K562 (cell line): ENCODE measurements at regions of chr1 and their contacts with region 1.

Region 1: GRCh38 chr1:54406339-54407153 is at the start of gene SSBP3:
- DNase-seq: peak; percentile 97 to 99 (median 97)
- ATAC-seq: peak; percentile 88
- H3K4me3 ChIP-seq: peak within 1 kb of the TSS; percentile 73
- H3K27ac ChIP-seq: peak within 1 kb of the TSS; percentile 97
- H3K4me1 ChIP-seq: peaks cover 64 to 70% of the 10 kb centered on the region in 2 experiments
- H3K27me3 ChIP-seq: no peaks in the 10 kb centered on the region
- CTCF ChIP-seq: peak in 1 of 3 experiments; percentile 12; a peak in 1 of 6 replicates
- EP300 ChIP-seq: no peak
- POLR2A ChIP-seq: peak; percentile 70
- RAD21 ChIP-seq: peak; percentile 21 to 29; a peak in 1 of 4 replicates
- polyA plus RNA-seq, gene SSBP3: 8.7 TPM

Region 2: DNA sequence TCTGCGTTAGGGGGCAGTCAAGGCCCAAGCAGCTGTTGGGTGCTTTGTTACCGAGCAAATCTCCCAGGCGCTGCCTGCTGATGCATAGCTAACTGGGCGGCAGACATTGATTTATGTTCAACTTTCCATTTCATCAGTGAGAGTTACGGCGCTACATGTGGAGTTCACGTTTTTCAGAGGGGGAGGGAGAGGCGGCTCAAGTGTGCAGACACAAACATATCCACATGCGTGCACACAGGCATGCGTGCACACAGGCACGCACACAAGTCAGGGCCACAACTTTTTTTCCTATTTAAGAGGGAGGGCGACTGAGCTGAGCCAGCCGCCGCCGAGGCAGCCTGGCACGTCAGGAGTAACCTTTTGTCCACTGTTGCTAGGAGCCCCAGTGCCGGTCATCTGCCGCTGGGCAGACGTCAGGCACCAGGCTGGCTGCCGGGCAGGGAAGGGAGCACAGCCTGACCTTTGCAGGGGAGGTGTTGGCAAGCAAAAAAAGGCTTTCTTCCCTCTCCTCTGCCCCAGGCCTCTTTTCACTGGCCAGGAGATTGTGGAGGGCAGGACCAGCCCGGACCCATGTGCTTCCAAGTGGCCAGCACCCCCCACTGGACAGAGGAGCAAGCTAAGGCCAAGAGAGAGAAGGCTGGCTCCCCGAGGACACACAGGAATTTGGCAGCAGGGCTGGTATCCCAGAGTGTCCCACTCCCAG is 133.3 kb before region 1 on chr1:
- CTCF ChIA-PET with region 1: no interaction called
- POLR2A ChIA-PET with region 1: no interaction called
- in situ Hi-C with region 1: no loop called
- intact Hi-C with region 1: loop called (anchors 1 kb)
- DNase-seq: peak; percentile 69 to 88 (median 77)
- ATAC-seq: peak; percentile 88
- H3K4me3 ChIP-seq: no peak overlapping the region; the same call in 1 of the 2 replicates
- H3K27ac ChIP-seq: peak overlapping the region; percentile 71
- H3K4me1 ChIP-seq: peaks cover 43 to 44% of the 10 kb centered on the region in 2 experiments
- H3K27me3 ChIP-seq: no peaks in the 10 kb centered on the region
- CTCF ChIP-seq: peak; percentile 73 to 83 (median 81); a peak in 5 of 6 replicates
- EP300 ChIP-seq: no peak; the same call in 1 of the 2 replicates
- POLR2A ChIP-seq: no peak
- RAD21 ChIP-seq: peak; percentile 76 to 94

Region 3: DNA sequence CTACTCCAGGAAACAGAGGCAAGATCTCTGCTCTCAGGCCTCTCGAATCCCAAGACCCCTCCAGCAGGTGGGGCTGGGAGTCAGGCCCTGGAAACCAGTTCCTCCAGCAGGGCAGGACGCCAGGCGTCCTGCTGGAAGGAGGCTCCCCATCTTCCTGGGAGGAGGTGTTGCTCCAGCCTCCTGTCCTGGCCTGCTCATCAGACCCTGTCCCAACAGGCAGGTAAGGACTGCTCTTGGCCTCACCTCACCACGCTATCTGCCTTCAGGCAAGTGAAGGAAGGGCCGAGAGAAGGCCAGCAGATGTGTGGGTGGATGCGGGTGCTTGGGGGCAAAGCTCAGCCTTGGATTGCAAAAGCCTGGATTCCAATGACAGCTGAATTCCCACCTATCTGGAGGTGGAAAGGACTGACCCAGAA is 83.2 kb before region 1 on chr1:
- CTCF ChIA-PET with region 1: no interaction called
- POLR2A ChIA-PET with region 1: interaction called, 3 read pairs
- in situ Hi-C with region 1: loop called (anchors 5 kb)
- intact Hi-C with region 1: no loop called
- DNase-seq: no peak
- ATAC-seq: peak; percentile 14; the same call in 2 of the 3 replicates
- H3K4me3 ChIP-seq: no peak overlapping the region
- H3K27ac ChIP-seq: no peak overlapping the region
- H3K4me1 ChIP-seq: peaks cover 13 to 23% of the 10 kb centered on the region in 2 experiments; a peak in 4 of 5 replicates
- H3K27me3 ChIP-seq: no peaks in the 10 kb centered on the region
- CTCF ChIP-seq: peak in 2 of 3 experiments; percentile 19 to 38; a peak in 3 of 6 replicates
- EP300 ChIP-seq: no peak
- POLR2A ChIP-seq: no peak
- RAD21 ChIP-seq: peak in 1 of 2 experiments; percentile 35; a peak in 1 of 4 replicates

Region 4: GRCh38 chr1:54384911-54385726 is 21.4 kb before region 1 on chr1:
- CTCF ChIA-PET with region 1: no interaction called
- POLR2A ChIA-PET with region 1: interaction called, 21 read pairs
- in situ Hi-C with region 1: no loop called
- intact Hi-C with region 1: no loop called
- DNase-seq: no peak
- ATAC-seq: peak; percentile 22
- H3K4me3 ChIP-seq: no peak overlapping the region
- H3K27ac ChIP-seq: peak overlapping the region; percentile 39; the same call in 1 of the 3 replicates
- H3K4me1 ChIP-seq: peaks cover 7 to 21% of the 10 kb centered on the region in 2 experiments; a peak in 4 of 5 replicates
- H3K27me3 ChIP-seq: no peaks in the 10 kb centered on the region
- CTCF ChIP-seq: no peak
- EP300 ChIP-seq: no peak
- POLR2A ChIP-seq: no peak
- RAD21 ChIP-seq: no peak

Region 5: GRCh38 chr1:54464482-54465146 is 58.1 kb after region 1 on chr1:
- CTCF ChIA-PET with region 1: no interaction called
- POLR2A ChIA-PET with region 1: interaction called, 6 read pairs
- in situ Hi-C with region 1: no loop called
- intact Hi-C with region 1: loop called (anchors 1 kb)
- DNase-seq: peak; percentile 88 to 98 (median 92)
- ATAC-seq: peak; percentile 92
- H3K4me3 ChIP-seq: no peak overlapping the region
- H3K27ac ChIP-seq: peak overlapping the region; percentile 67
- H3K4me1 ChIP-seq: peaks cover 37 to 41% of the 10 kb centered on the region in 2 experiments
- H3K27me3 ChIP-seq: no peaks in the 10 kb centered on the region
- CTCF ChIP-seq: no peak
- EP300 ChIP-seq: peak; percentile 95
- POLR2A ChIP-seq: no peak
- RAD21 ChIP-seq: peak; percentile 8 to 46; a peak in 2 of 4 replicates